Naive thymus-derived CD4-positive, alpha-beta T cell (primary cell): ENCODE measurements at regions of chr5 and their contacts with region 1.

Region 1: GRCh38 chr5:91225848-91226686 is 157.1 kb downstream of the ARRDC3 start:
- DNase-seq: peak; percentile 16 to 60 (median 46)
- ATAC-seq: peak; percentile 67
- H3K4me3 ChIP-seq: no peak overlapping the region
- H3K4me3 Mint-ChIP-seq: no peak overlapping the region
- H3K27ac ChIP-seq: no peak overlapping the region
- H3K27ac Mint-ChIP-seq: no peak overlapping the region
- H3K4me1 ChIP-seq: no peaks in the 10 kb centered on the region
- H3K4me1 Mint-ChIP-seq: no peaks in the 10 kb centered on the region
- H3K27me3 ChIP-seq: no peaks in the 10 kb centered on the region
- H3K27me3 Mint-ChIP-seq: peaks cover 0 to 15% (median 6%) of the 10 kb centered on the region in 5 donors

Region 2: GRCh38 chr5:90409318-90410177 is 816.5 kb before region 1 on chr5 and contains the start of gene CETN3:
- CTCF ChIA-PET with region 1: no interaction called
- POLR2A ChIA-PET with region 1: no interaction called
- intact Hi-C with region 1: loop called in 1 of 2 experiments (anchors 5 kb)
- DNase-seq: peak; percentile 72 to 93 (median 88)
- ATAC-seq: peak; percentile 94
- H3K4me3 ChIP-seq: peak within 1 kb of the TSS; percentile 100
- H3K4me3 Mint-ChIP-seq: no peak within 1 kb of the TSS
- H3K27ac ChIP-seq: peak within 1 kb of the TSS; percentile 93
- H3K27ac Mint-ChIP-seq: no peak within 1 kb of the TSS
- H3K4me1 ChIP-seq: peaks cover 7 to 13% of the 10 kb centered on the region in 2 donors
- H3K4me1 Mint-ChIP-seq: peaks cover 12 to 26% (median 16%) of the 10 kb centered on the region in 7 donors
- H3K27me3 ChIP-seq: no peaks in the 10 kb centered on the region
- H3K27me3 Mint-ChIP-seq: peaks cover 0 to 4% (median 0%) of the 10 kb centered on the region in 5 donors
- total RNA-seq, gene CETN3: 4.4 to 31.0 (median 22.1) TPM

Region 3: DNA sequence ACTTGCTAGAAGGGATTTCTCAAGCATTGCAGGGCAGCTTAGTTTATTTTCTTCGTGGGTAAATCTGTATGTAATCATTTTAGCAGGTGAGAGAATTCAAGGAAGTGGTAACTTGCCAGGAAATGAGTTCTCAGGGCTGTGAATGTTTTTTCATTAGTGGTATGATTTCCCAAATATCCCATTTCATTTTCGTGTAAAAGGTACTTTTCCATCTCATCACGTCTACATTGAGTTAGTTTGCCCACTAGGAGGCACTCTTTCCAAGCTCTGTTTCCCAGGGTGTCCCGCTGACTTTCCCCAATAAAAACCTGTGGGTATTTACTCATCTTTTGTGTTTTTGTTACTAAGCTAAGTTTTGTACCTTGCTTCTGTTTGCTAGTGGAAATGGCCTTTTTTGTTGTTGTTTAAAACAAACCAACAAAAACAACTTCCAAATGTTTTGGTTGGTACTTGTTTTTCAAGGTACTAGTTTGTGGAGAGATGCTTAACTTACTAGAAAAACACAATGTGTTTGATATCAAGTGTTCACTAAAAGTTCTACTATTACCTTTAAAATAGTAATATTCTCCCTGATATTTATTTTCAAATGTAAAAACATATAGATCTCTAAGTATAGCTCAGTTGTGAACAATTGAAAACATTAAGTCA is 293.9 kb before region 1 on chr5:
- CTCF ChIA-PET with region 1: no interaction called
- POLR2A ChIA-PET with region 1: interaction called, 3 read pairs
- intact Hi-C with region 1: loop called in 1 of 2 experiments (anchors 1 kb)
- DNase-seq: peak in 6 of 9 donors; percentile 27 to 46 (median 31)
- ATAC-seq: no peak
- H3K4me3 ChIP-seq: no peak overlapping the region
- H3K4me3 Mint-ChIP-seq: no peak overlapping the region
- H3K27ac ChIP-seq: no peak overlapping the region
- H3K27ac Mint-ChIP-seq: no peak overlapping the region
- H3K4me1 ChIP-seq: no peaks in the 10 kb centered on the region
- H3K4me1 Mint-ChIP-seq: peaks cover 0 to 5% (median 0%) of the 10 kb centered on the region in 7 donors
- H3K27me3 ChIP-seq: peaks cover 0 to 3% of the 10 kb centered on the region in 2 donors
- H3K27me3 Mint-ChIP-seq: peaks cover 3 to 14% (median 8%) of the 10 kb centered on the region in 5 donors

Region 4: GRCh38 chr5:91162534-91163381 is 63.3 kb before region 1 on chr5:
- CTCF ChIA-PET with region 1: no interaction called
- POLR2A ChIA-PET with region 1: no interaction called
- intact Hi-C with region 1: loop called in 1 of 2 experiments (anchors 5 kb)
- DNase-seq: peak in 2 of 9 donors; percentile 8 to 64
- ATAC-seq: peak; percentile 93
- H3K4me3 ChIP-seq: no peak overlapping the region
- H3K4me3 Mint-ChIP-seq: peak overlapping the region in 3 of 10 donors; percentile 0 to 46 (median 1)
- H3K27ac ChIP-seq: no peak overlapping the region
- H3K27ac Mint-ChIP-seq: peak overlapping the region in 4 of 9 donors; percentile 10 to 71 (median 35)
- H3K4me1 ChIP-seq: no peaks in the 10 kb centered on the region
- H3K4me1 Mint-ChIP-seq: peaks cover 5 to 24% (median 13%) of the 10 kb centered on the region in 7 donors
- H3K27me3 ChIP-seq: no peaks in the 10 kb centered on the region
- H3K27me3 Mint-ChIP-seq: no peaks in the 10 kb centered on the region

Region 5: DNA sequence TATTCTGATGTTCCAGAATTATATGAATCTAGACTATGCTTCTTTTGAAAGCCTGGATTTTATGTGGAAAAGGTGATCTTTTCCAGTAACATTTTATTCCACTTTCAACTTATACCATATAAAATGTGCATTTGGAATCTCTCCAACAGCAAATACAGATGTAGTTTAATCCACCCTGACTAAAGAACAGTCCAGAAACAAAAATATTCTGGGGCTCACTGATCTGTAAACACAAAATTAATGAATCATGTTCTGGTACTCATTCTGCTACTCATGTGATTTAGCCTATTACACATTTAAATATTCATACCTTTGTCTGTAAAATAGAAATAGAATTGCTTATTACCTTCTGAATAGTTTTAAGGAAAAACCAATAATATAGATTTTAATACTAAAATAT is 31.2 kb after region 1 on chr5:
- CTCF ChIA-PET with region 1: no interaction called
- POLR2A ChIA-PET with region 1: no interaction called
- intact Hi-C with region 1: no loop called
- DNase-seq: no peak
- ATAC-seq: no peak
- H3K4me3 ChIP-seq: no peak overlapping the region
- H3K4me3 Mint-ChIP-seq: no peak overlapping the region
- H3K27ac ChIP-seq: no peak overlapping the region
- H3K27ac Mint-ChIP-seq: no peak overlapping the region
- H3K4me1 ChIP-seq: no peaks in the 10 kb centered on the region
- H3K4me1 Mint-ChIP-seq: no peaks in the 10 kb centered on the region
- H3K27me3 ChIP-seq: no peaks in the 10 kb centered on the region
- H3K27me3 Mint-ChIP-seq: peaks cover 0 to 10% (median 0%) of the 10 kb centered on the region in 5 donors

Region 6: DNA sequence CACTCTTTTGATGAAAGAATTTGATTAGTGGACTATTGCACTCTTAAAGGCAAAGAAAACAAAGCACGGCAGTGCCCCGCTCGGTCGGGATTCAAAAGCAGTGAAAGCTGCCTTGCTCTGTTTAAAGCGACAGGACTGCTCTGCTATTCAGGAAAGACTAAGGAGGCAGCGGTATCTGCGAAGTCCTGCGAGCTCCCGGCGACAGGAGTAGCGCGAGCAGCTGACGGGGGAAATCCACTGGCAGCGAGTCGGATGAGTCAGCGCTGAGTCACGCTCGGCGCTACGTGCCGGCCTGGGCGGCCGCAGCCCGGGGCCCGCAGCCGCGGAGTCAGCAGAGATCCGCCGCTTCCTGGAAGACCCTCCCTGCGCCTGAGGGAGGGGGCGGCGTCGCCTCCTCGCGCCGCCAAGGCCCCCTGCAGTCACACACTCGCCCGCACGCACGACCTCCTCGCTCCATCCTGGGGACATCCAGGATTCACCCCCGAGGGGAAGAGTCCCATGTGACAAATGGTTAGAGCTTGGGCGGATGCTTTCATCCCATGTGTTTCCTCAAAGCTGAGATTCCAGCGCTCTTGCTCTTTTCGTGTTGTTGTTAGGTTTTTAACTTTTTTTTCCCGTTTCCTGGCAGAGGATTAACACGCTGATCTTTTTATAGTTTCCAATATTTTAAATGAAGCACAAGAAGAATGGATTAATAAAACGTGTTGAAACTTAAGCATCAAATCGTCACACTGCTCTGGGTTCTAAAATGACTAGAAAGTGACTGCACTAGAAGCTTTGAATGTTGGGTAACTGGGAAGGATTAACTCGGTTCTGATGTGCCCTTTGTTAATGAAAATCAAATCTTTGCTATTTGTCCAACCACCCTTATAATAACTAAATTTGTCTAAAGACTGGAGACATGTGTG is 54.5 kb after region 1 on chr5:
- CTCF ChIA-PET with region 1: no interaction called
- POLR2A ChIA-PET with region 1: no interaction called
- intact Hi-C with region 1: loop called (anchors 1 to 2 kb)
- DNase-seq: peak; percentile 45 to 89 (median 63)
- ATAC-seq: peak; percentile 90
- H3K4me3 ChIP-seq: peak overlapping the region; percentile 76
- H3K4me3 Mint-ChIP-seq: peak overlapping the region; percentile 88 to 99 (median 92)
- H3K27ac ChIP-seq: peak overlapping the region; percentile 41
- H3K27ac Mint-ChIP-seq: peak overlapping the region; percentile 74 to 94 (median 91)
- H3K4me1 ChIP-seq: peaks cover 0 to 4% of the 10 kb centered on the region in 2 donors
- H3K4me1 Mint-ChIP-seq: peaks cover 13 to 34% (median 23%) of the 10 kb centered on the region in 7 donors
- H3K27me3 ChIP-seq: no peaks in the 10 kb centered on the region
- H3K27me3 Mint-ChIP-seq: peaks cover 0 to 13% (median 0%) of the 10 kb centered on the region in 5 donors

Region 7: GRCh38 chr5:91419571-91420537 is 193.8 kb after region 1 on chr5:
- CTCF ChIA-PET with region 1: interaction called, 18 read pairs
- POLR2A ChIA-PET with region 1: no interaction called
- intact Hi-C with region 1: loop called (anchors 1 kb)
- DNase-seq: peak; percentile 40 to 72 (median 58)
- ATAC-seq: peak; percentile 60
- H3K4me3 ChIP-seq: no peak overlapping the region
- H3K4me3 Mint-ChIP-seq: peak overlapping the region in 1 of 10 donors; percentile 15
- H3K27ac ChIP-seq: no peak overlapping the region
- H3K27ac Mint-ChIP-seq: no peak overlapping the region
- H3K4me1 ChIP-seq: no peaks in the 10 kb centered on the region
- H3K4me1 Mint-ChIP-seq: peaks cover 0 to 30% (median 20%) of the 10 kb centered on the region in 7 donors
- H3K27me3 ChIP-seq: no peaks in the 10 kb centered on the region
- H3K27me3 Mint-ChIP-seq: peaks cover 0 to 5% (median 0%) of the 10 kb centered on the region in 5 donors